ENCODE measurements at regions of chr11 and their contacts with region 1.

Region 1: DNA sequence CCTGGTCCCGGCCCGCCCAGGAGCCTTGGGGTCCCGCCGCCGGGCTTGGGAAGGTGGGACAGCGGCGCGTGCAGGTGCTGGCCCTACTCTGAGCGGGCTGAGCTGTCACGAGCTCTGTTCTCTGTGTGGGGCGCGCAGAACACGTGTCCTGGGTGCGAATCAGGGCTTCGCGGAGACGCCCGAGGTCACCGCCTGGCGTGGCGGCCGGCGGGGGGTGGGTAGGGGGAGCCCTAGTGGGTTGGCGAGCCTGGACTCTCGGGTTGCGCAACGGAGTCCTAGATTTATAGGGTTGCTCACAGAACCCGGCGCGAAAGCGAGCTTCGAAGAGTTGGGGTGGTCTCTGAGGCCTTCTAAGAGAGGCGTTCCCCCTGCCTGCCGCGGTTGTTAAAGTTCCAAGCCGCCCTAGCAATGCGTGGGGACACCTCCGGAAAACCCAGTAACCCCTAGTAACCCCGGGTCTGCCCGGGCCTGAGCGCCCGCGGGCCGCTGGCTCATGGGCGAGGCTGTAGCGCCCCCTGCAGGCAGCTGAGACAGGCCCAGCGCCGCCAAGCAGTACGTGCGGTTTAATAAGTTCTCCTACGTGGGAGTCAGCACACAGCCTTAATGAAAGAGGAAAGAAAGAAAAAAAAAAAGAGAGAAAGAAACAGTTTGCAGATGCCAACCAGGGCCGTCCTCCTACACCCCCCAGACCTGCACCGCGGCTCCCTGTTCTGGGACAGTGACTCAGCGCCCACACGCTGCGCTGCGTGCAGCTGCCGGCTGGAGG is 2.8 kb downstream of the ADM start:
- DNase-seq: peak; percentile 91
- ATAC-seq: peak; percentile 72
- H3K4me3 ChIP-seq: peak overlapping the region; percentile 26 to 92 (median 55)
- H3K4me3 Mint-ChIP-seq: peak overlapping the region; percentile 98
- H3K27ac ChIP-seq: no peak overlapping the region
- H3K27ac Mint-ChIP-seq: peak overlapping the region; percentile 85
- H3K4me1 ChIP-seq: peaks cover 42 to 55% of the 10 kb centered on the region in 2 donors
- H3K4me1 Mint-ChIP-seq: peaks cover 50% of the 10 kb centered on the region
- H3K27me3 ChIP-seq: peaks cover 0 to 34% (median 12%) of the 10 kb centered on the region in 4 experiments
- H3K27me3 Mint-ChIP-seq: peaks cover 20% of the 10 kb centered on the region
- CTCF ChIP-seq: peak; percentile 98

Region 2: GRCh38 chr11:9314291-9315036 is 993.2 kb before region 1 on chr11 and contains the start of gene TMEM41B:
- CTCF ChIA-PET with region 1: no interaction called
- POLR2A ChIA-PET with region 1: no interaction called
- intact Hi-C with region 1: loop called (anchors 10 kb)
- DNase-seq: peak; percentile 98
- ATAC-seq: peak; percentile 97
- H3K4me3 ChIP-seq: peak within 1 kb of the TSS; percentile 81 to 94 (median 86)
- H3K4me3 Mint-ChIP-seq: peak within 1 kb of the TSS; percentile 100
- H3K27ac ChIP-seq: peak within 1 kb of the TSS; percentile 82 to 92
- H3K27ac Mint-ChIP-seq: peak within 1 kb of the TSS; percentile 99
- H3K4me1 ChIP-seq: peaks cover 14 to 17% of the 10 kb centered on the region in 2 donors
- H3K4me1 Mint-ChIP-seq: peaks cover 43% of the 10 kb centered on the region
- H3K27me3 ChIP-seq: no peaks in the 10 kb centered on the region
- H3K27me3 Mint-ChIP-seq: peaks cover 1% of the 10 kb centered on the region
- CTCF ChIP-seq: no peak
- total RNA-seq, gene TMEM41B: 38.5 and 43.9 TPM in 2 replicates

Region 3: GRCh38 chr11:9861860-9862725 is 445.5 kb before region 1 on chr11:
- CTCF ChIA-PET with region 1: interaction called, 12 read pairs
- POLR2A ChIA-PET with region 1: no interaction called
- intact Hi-C with region 1: loop called (anchors 2 kb)
- DNase-seq: peak; percentile 67
- ATAC-seq: peak; percentile 82
- H3K4me3 ChIP-seq: no peak overlapping the region
- H3K4me3 Mint-ChIP-seq: no peak overlapping the region
- H3K27ac ChIP-seq: no peak overlapping the region
- H3K27ac Mint-ChIP-seq: no peak overlapping the region
- H3K4me1 ChIP-seq: peaks cover 14 to 18% of the 10 kb centered on the region in 2 donors
- H3K4me1 Mint-ChIP-seq: peaks cover 28% of the 10 kb centered on the region
- H3K27me3 ChIP-seq: no peaks in the 10 kb centered on the region
- H3K27me3 Mint-ChIP-seq: no peaks in the 10 kb centered on the region
- CTCF ChIP-seq: peak; percentile 84

Region 4: GRCh38 chr11:10125522-10126133 is 182.0 kb before region 1 on chr11:
- CTCF ChIA-PET with region 1: no interaction called
- POLR2A ChIA-PET with region 1: interaction called, 11 read pairs
- intact Hi-C with region 1: no loop called
- DNase-seq: no peak
- ATAC-seq: no peak
- H3K4me3 ChIP-seq: no peak overlapping the region
- H3K4me3 Mint-ChIP-seq: no peak overlapping the region
- H3K27ac ChIP-seq: no peak overlapping the region
- H3K27ac Mint-ChIP-seq: no peak overlapping the region
- H3K4me1 ChIP-seq: no peaks in the 10 kb centered on the region
- H3K4me1 Mint-ChIP-seq: no peaks in the 10 kb centered on the region
- H3K27me3 ChIP-seq: no peaks in the 10 kb centered on the region
- H3K27me3 Mint-ChIP-seq: no peaks in the 10 kb centered on the region
- CTCF ChIP-seq: no peak

Region 5: DNA sequence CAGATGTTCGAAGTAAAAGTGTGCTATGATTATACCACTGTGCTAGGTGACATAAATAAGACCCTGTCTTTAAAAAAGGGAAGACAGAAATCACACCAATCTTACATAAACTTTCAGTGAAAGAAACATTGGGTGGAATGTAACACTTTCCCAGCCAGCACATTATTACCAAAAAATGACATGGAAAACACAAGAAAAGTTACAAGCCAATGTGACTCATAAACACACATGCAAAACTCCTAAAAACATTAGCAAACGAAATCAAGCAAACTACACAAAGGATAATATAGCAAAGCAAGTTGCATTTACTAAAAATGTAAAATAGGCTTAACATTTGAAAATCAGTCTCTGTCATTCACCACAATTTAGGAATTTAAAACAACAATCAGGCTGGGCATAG is 60.6 kb before region 1 on chr11:
- CTCF ChIA-PET with region 1: no interaction called
- POLR2A ChIA-PET with region 1: no interaction called
- intact Hi-C with region 1: no loop called
- DNase-seq: no peak
- ATAC-seq: no peak
- H3K4me3 ChIP-seq: no peak overlapping the region
- H3K4me3 Mint-ChIP-seq: no peak overlapping the region
- H3K27ac ChIP-seq: no peak overlapping the region
- H3K27ac Mint-ChIP-seq: no peak overlapping the region
- H3K4me1 ChIP-seq: no peaks in the 10 kb centered on the region
- H3K4me1 Mint-ChIP-seq: peaks cover 7% of the 10 kb centered on the region
- H3K27me3 ChIP-seq: no peaks in the 10 kb centered on the region
- H3K27me3 Mint-ChIP-seq: no peaks in the 10 kb centered on the region
- CTCF ChIP-seq: no peak

Region 6: DNA sequence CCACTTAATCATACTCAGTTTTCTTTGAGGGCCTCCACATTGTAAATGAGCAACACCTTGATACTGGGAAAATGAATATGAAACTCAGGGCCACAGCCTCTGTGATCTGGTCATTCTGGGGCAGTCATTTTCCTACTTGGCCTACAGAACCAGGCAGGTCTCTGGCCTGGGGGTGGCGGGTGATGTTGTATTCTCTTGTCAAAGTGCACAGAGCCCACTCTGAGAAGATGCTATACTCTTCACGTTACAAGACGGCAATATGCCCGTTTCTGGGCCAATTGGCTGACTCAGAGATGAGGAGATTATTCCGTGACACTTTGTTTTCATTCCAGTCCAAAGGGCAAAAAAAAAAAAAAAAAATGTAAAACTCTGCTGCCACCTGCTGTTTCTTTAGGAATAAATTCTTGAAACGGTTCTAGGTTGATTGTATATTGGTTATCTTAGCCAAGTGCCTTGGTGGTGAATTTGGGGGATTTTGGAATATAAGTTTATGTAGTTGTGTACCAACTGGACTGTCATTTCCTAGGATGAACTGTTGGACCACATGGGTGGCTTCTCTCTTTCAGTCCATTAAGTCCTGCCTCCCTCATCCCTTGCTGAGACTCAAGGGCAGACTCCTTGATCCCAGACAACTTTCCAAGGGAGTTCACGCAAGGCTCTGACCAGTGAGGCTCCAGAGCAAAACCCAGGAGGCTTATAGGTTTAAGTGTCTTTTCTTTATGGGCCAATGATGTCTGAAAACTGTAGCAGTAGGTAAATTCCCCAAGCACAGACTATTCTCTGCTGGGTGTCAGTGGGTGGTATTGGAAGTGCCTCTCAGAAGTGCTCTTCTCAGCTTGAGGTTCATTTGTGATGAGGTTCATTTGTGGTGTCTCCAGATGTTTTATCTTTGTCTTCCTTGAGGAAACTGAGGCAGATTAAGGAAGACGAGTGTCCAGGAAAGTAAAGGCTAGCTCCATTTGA is 15.5 kb after region 1 on chr11:
- CTCF ChIA-PET with region 1: interaction called, 100 read pairs
- POLR2A ChIA-PET with region 1: interaction called, 3 read pairs
- intact Hi-C with region 1: loop called (anchors 1 kb)
- DNase-seq: peak; percentile 70
- ATAC-seq: peak; percentile 44
- H3K4me3 ChIP-seq: no peak overlapping the region
- H3K4me3 Mint-ChIP-seq: no peak overlapping the region
- H3K27ac ChIP-seq: no peak overlapping the region
- H3K27ac Mint-ChIP-seq: peak overlapping the region; percentile 67
- H3K4me1 ChIP-seq: peaks cover 7 to 14% of the 10 kb centered on the region in 2 donors
- H3K4me1 Mint-ChIP-seq: peaks cover 17% of the 10 kb centered on the region
- H3K27me3 ChIP-seq: peaks cover 0 to 6% (median 0%) of the 10 kb centered on the region in 4 experiments
- H3K27me3 Mint-ChIP-seq: peaks cover 16% of the 10 kb centered on the region
- CTCF ChIP-seq: peak; percentile 76

Region 7: DNA sequence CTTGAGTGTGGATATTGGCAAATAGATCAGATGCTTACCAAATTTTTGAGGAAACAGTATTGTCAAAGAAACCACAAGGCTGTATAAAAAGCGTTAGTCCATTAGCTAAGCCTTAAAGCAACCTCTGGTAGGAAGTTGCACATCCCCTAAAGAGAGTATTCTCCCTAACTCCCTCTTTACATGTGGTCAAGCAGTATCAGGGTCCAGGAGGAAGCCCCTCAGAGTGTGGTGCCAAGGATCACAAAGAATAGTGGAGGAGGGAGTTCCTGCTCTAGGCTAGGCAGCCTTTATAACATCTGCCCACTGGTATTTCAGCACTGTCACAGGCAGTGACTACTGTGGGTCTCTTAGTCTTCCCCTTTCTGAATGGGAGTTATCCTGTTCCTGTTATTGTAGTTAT is 128.6 kb after region 1 on chr11:
- CTCF ChIA-PET with region 1: no interaction called
- POLR2A ChIA-PET with region 1: no interaction called
- intact Hi-C with region 1: no loop called
- DNase-seq: no peak
- ATAC-seq: no peak
- H3K4me3 ChIP-seq: no peak overlapping the region
- H3K4me3 Mint-ChIP-seq: no peak overlapping the region
- H3K27ac ChIP-seq: no peak overlapping the region
- H3K27ac Mint-ChIP-seq: no peak overlapping the region
- H3K4me1 ChIP-seq: peaks cover 0 to under 1% of the 10 kb centered on the region in 2 donors
- H3K4me1 Mint-ChIP-seq: peaks cover 13% of the 10 kb centered on the region
- H3K27me3 ChIP-seq: no peaks in the 10 kb centered on the region
- H3K27me3 Mint-ChIP-seq: no peaks in the 10 kb centered on the region
- CTCF ChIP-seq: no peak

Measured in B cell (primary cell).